Right ventricle myocardium inferior (tissue), 1 donor: ENCODE measurements at regions of chr16 and their contacts with region 1.

Region 1: DNA sequence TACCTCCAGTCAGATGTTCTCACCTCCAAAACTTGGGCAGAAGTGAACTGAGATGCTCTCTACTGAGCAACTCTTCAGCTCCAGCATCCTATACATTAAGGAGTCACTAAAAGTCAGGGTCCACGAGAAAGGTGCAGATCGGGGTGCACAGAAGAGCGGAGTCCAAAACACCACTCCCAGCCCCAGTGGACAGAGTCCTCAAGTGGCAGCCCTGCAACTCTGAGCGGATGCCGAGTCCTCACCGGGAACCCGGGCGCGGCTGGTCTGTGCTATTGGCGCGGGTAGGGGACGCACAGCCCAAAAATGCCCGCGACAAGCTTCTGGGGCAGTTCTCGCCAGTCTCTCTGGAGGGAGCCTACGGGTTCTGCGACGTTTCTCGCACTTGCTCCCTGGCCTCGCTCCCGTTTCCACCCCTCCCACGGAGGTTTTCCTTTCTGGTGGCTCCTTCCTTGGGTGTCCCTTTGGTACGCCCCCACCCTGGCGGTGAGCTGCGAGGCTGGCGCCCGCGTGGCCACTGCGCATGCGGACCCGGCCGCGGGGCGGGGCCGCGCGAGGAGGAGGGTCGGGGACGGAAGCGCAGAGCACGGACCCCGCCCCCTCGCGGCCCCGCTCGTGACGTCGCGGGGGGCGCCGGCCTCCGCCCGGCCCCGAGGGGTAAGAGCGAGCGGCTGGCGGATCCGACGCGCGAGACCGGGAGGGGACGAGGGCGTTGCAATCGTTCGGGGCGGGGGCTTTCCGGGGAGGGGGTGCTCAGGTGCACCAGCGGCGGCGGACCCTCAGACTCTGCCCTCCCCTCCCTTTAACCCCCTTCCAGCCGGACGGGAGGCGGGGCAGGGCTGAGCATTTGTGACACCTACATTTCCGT is at the start of gene TMEM219:
- DNase-seq: peak; percentile 95
- ATAC-seq: peak; percentile 99
- total RNA-seq, gene TMEM219: 74.4 TPM

Region 2: DNA sequence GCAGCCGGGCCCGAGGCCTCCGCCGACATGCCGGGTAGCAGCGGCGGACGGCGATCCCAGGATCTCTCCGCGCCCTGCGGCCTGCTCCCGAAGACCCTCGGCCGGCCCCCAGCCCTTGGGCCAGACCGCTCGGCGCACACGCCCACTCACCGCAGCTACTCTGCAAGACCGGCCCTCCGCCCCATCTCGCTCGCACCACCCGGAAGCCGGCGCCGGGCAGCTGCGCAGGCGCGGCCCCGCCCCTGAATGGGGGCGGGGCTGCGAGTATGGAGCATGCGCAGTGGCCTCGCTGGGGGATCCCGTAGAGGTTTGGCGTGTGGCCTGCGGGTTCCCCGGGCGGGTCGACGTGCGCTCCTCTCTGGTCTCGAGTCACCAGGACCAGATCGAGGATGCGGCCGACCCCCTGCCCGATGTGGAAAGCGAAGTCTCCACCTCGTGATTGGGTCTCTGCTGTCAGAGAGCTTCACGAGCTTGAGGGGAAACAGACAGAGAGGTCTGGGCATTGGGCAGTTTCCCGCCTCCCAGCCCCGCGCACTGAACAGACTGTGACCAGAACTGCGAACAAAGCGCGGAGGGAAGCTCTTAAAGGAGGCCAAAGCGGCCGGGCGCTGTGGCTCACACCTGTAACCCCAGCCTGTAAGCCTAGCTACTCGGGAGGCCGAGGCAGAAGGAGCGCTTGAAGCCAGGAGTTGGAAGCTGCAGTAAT is 35.6 kb before region 1 on chr16 and contains the start of gene KCTD13:
- intact Hi-C with region 1: loop called (anchors 2 kb)
- DNase-seq: peak; percentile 95
- ATAC-seq: peak; percentile 98
- total RNA-seq, gene KCTD13: 8.0 TPM

Region 3: DNA sequence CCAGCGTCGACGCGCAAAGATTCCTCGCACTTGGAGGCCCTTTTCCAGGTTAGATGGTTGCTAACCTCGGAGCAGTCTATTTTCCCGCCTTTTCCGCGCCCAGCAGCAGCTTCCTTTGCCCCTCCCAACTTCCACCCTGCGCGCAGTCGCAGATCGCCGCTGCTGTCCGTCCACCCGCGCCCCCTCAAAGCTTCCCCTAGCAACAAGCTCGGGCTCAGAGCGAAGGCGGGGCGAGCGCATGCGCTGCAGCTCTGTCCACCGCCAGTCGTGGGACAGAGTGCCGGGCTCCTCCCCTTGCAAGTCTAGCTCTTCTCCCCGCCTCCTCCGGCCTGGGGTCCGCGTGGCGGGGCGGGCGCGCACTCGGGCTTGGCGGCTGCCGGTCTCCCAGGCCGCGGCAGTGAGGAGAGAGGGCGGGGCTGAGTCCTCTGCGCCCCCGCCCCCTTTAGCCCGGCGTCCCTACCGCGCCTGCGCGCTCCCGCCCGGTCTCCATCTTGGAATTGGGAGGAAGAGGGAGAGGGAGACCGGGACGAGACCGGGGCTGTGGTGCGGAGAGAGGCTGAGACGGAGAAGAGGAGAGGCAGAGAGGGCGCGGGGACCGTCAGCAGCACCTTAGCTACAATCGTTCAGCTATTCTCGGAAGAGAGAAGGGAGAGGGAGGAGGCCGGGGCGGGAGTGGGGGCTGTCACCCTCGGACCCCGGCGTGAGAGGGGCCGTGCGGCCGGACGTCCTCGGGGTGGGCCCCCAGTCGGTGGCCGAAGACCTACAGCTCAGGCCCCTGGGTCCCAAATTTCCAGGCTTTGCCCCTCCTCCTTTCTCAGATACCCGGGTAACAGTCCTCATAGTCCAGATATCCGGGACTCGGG is 11.9 kb after region 1 on chr16 and contains the start of gene TAOK2:
- intact Hi-C with region 1: loop called (anchors 2 kb)
- DNase-seq: peak; percentile 99
- ATAC-seq: peak; percentile 99
- total RNA-seq, gene TAOK2: 32.7 TPM